ENCODE measurements at regions of chr9 and their contacts with region 1.

Region 1: DNA sequence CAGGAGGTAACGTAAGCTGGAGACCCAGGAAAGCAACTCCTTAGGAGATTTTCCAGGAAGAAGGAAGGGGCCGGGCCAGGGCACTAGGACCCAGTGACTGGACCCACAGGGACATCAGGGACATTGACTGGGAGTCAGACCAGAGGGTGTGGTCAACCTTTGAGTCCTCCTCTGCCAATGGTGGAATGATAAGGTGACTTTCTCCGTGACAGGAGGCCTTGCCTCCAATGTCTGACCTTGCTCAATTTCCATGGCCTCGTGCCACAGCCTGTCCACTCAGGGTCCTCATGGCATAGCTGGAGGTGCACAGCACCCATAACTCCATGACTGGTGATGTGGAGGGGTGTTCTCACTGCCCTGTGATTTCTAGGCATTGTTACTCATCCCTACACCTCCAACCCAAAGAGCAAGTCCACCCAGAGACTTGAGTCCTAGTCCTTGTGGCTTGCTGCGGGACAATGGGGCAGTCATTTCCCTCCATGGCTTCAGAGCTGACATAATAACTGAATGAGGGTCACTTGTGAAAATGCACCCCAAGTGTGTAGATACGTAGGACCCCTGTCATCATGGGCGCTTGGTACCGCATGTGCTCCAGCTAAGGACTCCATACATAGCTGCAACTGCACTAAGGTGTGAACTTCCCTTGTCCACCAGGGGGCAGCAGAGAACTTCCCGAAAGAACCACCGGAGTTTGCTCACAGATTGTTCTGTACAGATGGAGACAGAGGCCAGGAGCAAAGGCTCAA is 4.1 kb upstream of the AMBP start:
- DNase-seq: peak; percentile 91
- H3K4me3 Mint-ChIP-seq: no peak overlapping the region
- H3K27ac Mint-ChIP-seq: no peak overlapping the region
- H3K4me1 Mint-ChIP-seq: no peaks in the 10 kb centered on the region
- H3K27me3 Mint-ChIP-seq: peaks cover 5% of the 10 kb centered on the region
- CTCF ChIP-seq: peak; percentile 81

Region 2: GRCh38 chr9:113737517-113738271 is 344.5 kb before region 1 on chr9:
- CTCF ChIA-PET with region 1: interaction called, 3 read pairs
- POLR2A ChIA-PET with region 1: no interaction called
- intact Hi-C with region 1: loop called (anchors 1 kb)
- DNase-seq: peak; percentile 75
- H3K4me3 Mint-ChIP-seq: no peak overlapping the region
- H3K27ac Mint-ChIP-seq: no peak overlapping the region
- H3K4me1 Mint-ChIP-seq: peaks cover 6% of the 10 kb centered on the region
- H3K27me3 Mint-ChIP-seq: peaks cover 3% of the 10 kb centered on the region
- CTCF ChIP-seq: peak; percentile 72

Region 3: DNA sequence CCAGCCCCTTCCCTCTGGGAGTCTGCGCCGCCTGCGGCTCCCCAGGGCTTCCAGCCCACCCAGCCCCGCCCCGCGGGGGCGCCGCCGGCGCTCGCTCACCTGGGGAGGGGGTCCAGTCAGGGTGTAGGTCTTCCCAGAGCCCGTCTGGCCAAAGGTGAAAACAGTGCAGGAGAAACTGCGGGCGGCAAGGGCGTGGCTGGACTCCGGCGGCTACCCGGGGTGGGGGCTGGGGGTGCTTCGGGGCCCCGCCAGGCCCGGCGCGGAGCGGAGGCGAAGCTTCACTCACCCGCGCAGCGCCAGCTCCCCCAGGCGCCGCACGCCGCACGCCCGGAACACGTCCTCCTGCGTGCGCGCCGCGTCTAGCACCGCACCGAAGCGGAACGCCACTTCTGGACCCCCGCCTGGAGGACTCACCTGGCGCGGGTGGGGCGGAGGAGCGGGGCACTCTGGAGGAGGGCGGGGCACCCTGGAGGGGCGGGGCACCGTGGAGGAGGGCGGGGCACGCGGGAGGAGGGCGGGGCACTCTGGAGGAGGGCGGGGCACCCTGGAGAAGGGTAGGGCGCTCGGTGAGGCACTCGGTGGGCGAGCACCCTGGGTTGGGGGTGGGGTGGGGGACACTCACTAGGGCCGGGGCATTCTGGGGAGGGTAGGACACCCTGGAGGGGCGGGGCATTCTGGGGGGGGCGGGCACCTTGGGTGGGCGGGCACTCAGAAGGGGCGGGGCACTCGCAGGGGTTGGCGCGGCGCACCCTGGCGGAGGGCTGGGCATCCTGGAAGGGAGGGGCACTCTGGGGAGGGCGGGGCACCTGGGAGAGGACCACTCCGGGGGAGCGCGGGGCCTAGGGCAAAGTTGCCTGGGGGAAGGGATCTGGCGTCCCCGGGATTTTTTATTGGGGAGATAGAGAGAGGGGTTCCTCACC is 16.1 kb after region 1 on chr9:
- CTCF ChIA-PET with region 1: interaction called, 36 read pairs
- POLR2A ChIA-PET with region 1: no interaction called
- intact Hi-C with region 1: no loop called
- DNase-seq: no peak
- H3K4me3 Mint-ChIP-seq: no peak overlapping the region
- H3K27ac Mint-ChIP-seq: no peak overlapping the region
- H3K4me1 Mint-ChIP-seq: no peaks in the 10 kb centered on the region
- H3K27me3 Mint-ChIP-seq: peaks cover 7% of the 10 kb centered on the region
- CTCF ChIP-seq: no peak

Region 4: DNA sequence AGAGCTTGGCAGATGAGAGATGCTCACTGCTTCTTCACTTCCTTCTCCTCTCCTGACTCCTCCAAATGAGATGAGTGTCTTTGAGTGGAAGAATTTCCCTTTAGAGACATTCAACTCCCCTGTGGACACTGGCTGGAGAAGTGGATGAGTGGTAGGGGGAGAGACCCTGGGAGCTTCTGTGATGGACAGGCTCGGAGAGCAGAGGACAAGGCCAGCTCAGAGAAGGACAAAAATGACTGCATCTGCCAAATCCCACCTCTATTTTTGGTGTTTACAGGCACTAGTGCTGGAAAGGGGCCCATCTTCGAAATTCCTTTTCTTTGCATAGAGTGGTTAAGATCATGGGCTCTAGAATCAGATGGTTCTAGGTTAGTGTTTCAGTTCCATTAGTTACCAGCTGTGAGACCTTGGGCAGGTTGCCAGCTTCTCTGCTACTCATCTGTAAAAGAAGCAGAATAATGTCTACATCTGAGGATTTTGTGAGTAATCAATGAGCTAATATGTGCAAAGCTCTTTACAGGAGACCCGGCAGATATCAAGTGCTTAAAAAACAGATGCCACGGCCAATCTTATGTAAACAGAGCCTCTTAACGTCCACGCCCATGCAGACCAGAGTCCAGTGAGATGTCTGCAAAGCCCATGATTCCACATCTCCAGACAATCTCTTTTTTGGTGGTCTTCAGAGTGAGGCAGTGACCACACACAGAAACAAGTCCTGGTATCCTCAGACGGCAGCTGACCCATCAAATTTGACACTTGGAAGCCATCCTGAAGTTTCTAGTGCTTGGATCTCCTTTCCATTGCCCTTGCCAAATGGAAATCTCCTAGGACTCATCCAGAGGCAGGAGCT is 59.6 kb after region 1 on chr9:
- CTCF ChIA-PET with region 1: interaction called, 12 read pairs
- POLR2A ChIA-PET with region 1: no interaction called
- intact Hi-C with region 1: no loop called
- DNase-seq: no peak
- H3K4me3 Mint-ChIP-seq: no peak overlapping the region
- H3K27ac Mint-ChIP-seq: no peak overlapping the region
- H3K4me1 Mint-ChIP-seq: no peaks in the 10 kb centered on the region
- H3K27me3 Mint-ChIP-seq: peaks cover 49% of the 10 kb centered on the region
- CTCF ChIP-seq: no peak

Region 5: GRCh38 chr9:114291064-114291474 is 208.9 kb after region 1 on chr9:
- CTCF ChIA-PET with region 1: interaction called, 73 read pairs
- POLR2A ChIA-PET with region 1: interaction called, 4 read pairs
- intact Hi-C with region 1: loop called (anchors 1 kb)
- DNase-seq: peak; percentile 76
- H3K4me3 Mint-ChIP-seq: no peak overlapping the region
- H3K27ac Mint-ChIP-seq: no peak overlapping the region
- H3K4me1 Mint-ChIP-seq: peaks cover 11% of the 10 kb centered on the region
- H3K27me3 Mint-ChIP-seq: no peaks in the 10 kb centered on the region
- CTCF ChIP-seq: peak; percentile 96

Measured in MCF 10A (cell line).